ENCODE measurements at regions of chr9 and their contacts with region 1.

Region 1: DNA sequence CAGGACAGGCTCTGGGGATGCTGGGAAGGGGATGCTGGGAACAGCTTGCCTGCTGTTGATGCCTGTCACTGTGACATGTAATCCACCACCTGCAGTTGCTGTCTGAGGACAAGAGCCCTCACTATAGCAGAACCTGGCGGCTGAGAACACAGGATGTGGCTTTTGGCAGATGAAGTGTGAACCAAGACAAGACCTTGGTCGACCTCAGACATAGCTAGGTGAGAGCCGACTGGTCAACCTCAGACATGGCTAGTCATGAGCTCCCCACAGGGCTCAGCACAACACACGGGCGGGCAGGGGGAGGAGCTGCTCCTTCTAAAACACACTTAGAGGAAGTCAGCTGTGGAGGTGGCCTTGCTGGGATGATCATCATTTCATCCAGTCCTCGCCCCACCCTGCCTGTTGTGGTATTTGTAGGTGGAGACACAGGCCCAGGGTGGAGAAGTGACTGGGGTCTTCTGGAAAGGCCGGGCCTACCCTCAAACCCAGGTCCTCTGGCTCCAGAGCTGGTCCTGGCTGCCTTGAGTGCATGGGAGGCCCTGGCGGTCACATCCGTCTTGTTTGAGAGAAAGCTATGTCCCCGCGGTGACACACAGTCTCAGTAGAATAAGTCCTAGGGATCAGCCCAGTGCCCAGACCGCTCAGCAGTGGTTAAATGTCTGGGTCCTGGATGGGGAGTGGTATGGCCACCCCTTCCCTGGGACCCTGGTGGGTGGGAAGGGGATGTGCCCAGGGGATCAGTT is 6.1 kb downstream of the SUSD3 start:
- DNase-seq: peak; percentile 95
- H3K4me3 Mint-ChIP-seq: peak overlapping the region; percentile 74
- H3K27ac Mint-ChIP-seq: peak overlapping the region; percentile 94
- H3K4me1 Mint-ChIP-seq: peaks cover 77% of the 10 kb centered on the region
- H3K27me3 Mint-ChIP-seq: no peaks in the 10 kb centered on the region

Region 2: GRCh38 chr9:93051680-93052089 is 12.9 kb before region 1 on chr9:
- CTCF ChIA-PET with region 1: interaction called, 3 read pairs
- POLR2A ChIA-PET with region 1: interaction called, 11 read pairs
- DNase-seq: no peak
- H3K4me3 Mint-ChIP-seq: no peak overlapping the region
- H3K27ac Mint-ChIP-seq: no peak overlapping the region
- H3K4me1 Mint-ChIP-seq: peaks cover 11% of the 10 kb centered on the region
- H3K27me3 Mint-ChIP-seq: no peaks in the 10 kb centered on the region

Region 3: DNA sequence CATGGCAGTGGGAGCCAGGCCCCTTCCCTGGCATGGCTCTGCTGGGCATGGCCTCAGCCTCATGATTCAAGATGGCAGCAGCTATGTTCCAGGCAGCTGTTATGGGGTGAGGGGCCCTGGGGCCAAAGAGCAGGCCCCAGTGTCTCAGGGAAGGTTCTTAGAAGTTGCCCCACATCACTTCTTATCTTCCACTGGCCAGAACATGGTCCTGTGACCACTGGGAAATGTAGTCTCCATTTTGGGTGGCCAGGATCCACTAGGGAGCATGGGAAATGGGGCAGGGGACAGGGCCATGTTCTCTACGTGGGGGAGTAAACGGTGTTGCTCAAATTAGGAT is 12.2 kb after region 1 on chr9:
- CTCF ChIA-PET with region 1: interaction called, 4 read pairs
- POLR2A ChIA-PET with region 1: interaction called, 17 read pairs
- DNase-seq: no peak
- H3K4me3 Mint-ChIP-seq: no peak overlapping the region
- H3K27ac Mint-ChIP-seq: no peak overlapping the region
- H3K4me1 Mint-ChIP-seq: peaks cover 12% of the 10 kb centered on the region
- H3K27me3 Mint-ChIP-seq: no peaks in the 10 kb centered on the region

Region 4: DNA sequence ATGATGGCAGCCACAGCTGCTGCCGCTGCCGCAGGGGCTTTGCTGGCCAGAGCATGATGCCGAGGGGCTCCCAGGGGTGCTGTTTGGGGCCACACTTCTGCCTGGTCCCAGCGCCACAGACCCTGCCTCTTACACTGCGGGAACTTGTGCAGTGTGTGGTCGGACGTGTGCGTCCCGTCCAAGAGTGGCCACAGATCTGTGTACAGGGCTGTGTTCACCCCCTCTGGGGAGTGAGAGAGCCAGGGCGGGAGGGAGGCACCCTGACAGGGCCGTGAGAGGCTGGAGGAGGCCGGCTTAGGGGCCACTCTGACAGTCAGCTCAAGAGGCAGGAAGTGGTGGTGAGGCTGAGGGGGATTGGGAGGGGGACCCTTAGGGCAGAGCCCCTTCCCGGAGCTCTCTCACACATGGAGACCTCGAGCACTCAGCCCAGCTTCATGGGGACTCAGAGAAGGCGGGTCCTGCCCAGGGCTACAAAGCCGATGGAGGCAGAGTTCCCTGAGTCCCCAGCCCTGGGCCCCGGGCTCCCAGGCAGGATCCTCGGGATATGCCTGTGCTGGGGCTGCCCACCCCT is 18.4 kb after region 1 on chr9:
- CTCF ChIA-PET with region 1: interaction called, 8 read pairs
- POLR2A ChIA-PET with region 1: interaction called, 21 read pairs
- DNase-seq: no peak
- H3K4me3 Mint-ChIP-seq: no peak overlapping the region
- H3K27ac Mint-ChIP-seq: peak overlapping the region; percentile 72
- H3K4me1 Mint-ChIP-seq: peaks cover 44% of the 10 kb centered on the region
- H3K27me3 Mint-ChIP-seq: no peaks in the 10 kb centered on the region

Region 5: GRCh38 chr9:93095205-93096130 is 30.9 kb after region 1 on chr9:
- CTCF ChIA-PET with region 1: interaction called, 8 read pairs
- POLR2A ChIA-PET with region 1: interaction called, 63 read pairs
- DNase-seq: peak; percentile 100
- H3K4me3 Mint-ChIP-seq: peak overlapping the region; percentile 76
- H3K27ac Mint-ChIP-seq: peak overlapping the region; percentile 96
- H3K4me1 Mint-ChIP-seq: peaks cover 78% of the 10 kb centered on the region
- H3K27me3 Mint-ChIP-seq: no peaks in the 10 kb centered on the region